Activated T-helper 1 cell treated with anti-CD3 and anti-CD28 coated beads, Interleukin-12 subunit alpha, Interleukin-12 subunit beta, Interleukin-2, Interleukin-4 antibody, amounts not matched to agents 30 ng/mL and 10 ng/mL and 1 ng/mL, durations not matched to agents 14 hours and 24 hours and 36 hours (primary cell): ENCODE measurements at regions of chr3 and their contacts with region 1.

Region 1: GRCh38 chr3:59759298-59760031 is 709.6 kb upstream of the CFAP20DC start:
- DNase-seq: no peak
- H3K4me3 Mint-ChIP-seq: peak overlapping the region; percentile 32
- H3K27ac Mint-ChIP-seq: no peak overlapping the region
- H3K4me1 Mint-ChIP-seq: peaks cover 67% of the 10 kb centered on the region
- H3K27me3 Mint-ChIP-seq: no peaks in the 10 kb centered on the region

Region 2: GRCh38 chr3:59726279-59726678 is 33.2 kb before region 1 on chr3:
- intact Hi-C with region 1: loop called (anchors 2 kb)
- DNase-seq: peak; percentile 9
- H3K4me3 Mint-ChIP-seq: no peak overlapping the region
- H3K27ac Mint-ChIP-seq: no peak overlapping the region
- H3K4me1 Mint-ChIP-seq: peaks cover 26% of the 10 kb centered on the region
- H3K27me3 Mint-ChIP-seq: peaks cover 5% of the 10 kb centered on the region

Region 3: GRCh38 chr3:59771768-59772181 is 12.3 kb after region 1 on chr3:
- intact Hi-C with region 1: loop called (anchors 1 kb)
- DNase-seq: no peak
- H3K4me3 Mint-ChIP-seq: no peak overlapping the region
- H3K27ac Mint-ChIP-seq: peak overlapping the region; percentile 32
- H3K4me1 Mint-ChIP-seq: peaks cover 50% of the 10 kb centered on the region
- H3K27me3 Mint-ChIP-seq: peaks cover 7% of the 10 kb centered on the region

Region 4: GRCh38 chr3:59873576-59874230 is 114.2 kb after region 1 on chr3:
- intact Hi-C with region 1: no loop called
- DNase-seq: no peak
- H3K4me3 Mint-ChIP-seq: no peak overlapping the region
- H3K27ac Mint-ChIP-seq: no peak overlapping the region
- H3K4me1 Mint-ChIP-seq: peaks cover 36% of the 10 kb centered on the region
- H3K27me3 Mint-ChIP-seq: no peaks in the 10 kb centered on the region

Region 5: DNA sequence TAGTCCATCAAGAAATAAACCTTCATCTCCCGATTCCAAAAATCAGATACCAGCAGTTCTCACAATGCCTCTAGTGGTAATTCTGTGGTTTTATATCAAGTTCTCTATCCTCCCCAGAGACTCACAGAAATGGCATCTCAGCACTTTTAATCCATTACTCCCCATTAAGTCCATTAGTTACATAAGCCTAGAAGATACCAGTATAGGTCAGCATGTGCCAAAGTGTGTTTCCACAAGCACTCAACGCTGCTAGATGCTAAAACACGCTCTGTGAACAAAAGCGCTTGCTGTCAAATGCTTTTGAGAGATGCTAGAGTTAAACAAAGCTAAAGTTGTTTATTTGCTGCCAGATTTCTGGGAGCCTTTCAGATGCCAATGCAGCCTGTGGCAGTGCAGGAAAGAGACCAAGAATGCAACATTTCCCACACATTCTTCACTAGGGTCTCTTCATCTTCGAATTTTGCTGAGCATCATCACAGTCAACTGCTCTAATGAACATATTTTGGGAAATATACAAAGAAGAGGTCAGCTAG is 209.1 kb after region 1 on chr3:
- intact Hi-C with region 1: no loop called
- DNase-seq: no peak
- H3K4me3 Mint-ChIP-seq: no peak overlapping the region
- H3K27ac Mint-ChIP-seq: no peak overlapping the region
- H3K4me1 Mint-ChIP-seq: no peaks in the 10 kb centered on the region
- H3K27me3 Mint-ChIP-seq: no peaks in the 10 kb centered on the region